ENCODE measurements at regions of chr12 and their contacts with region 1.

Region 1: GRCh38 chr12:55280991-55281390 is 15.4 kb downstream of the OR6C6 start:
- DNase-seq: no peak
- ATAC-seq: no peak
- H3K4me3 ChIP-seq: no peak overlapping the region
- H3K4me3 Mint-ChIP-seq: no peak overlapping the region
- H3K27ac ChIP-seq: no peak overlapping the region
- H3K27ac Mint-ChIP-seq: no peak overlapping the region
- H3K4me1 ChIP-seq: no peaks in the 10 kb centered on the region
- H3K4me1 Mint-ChIP-seq: no peaks in the 10 kb centered on the region
- H3K27me3 ChIP-seq: no peaks in the 10 kb centered on the region
- H3K27me3 Mint-ChIP-seq: peaks cover 18% of the 10 kb centered on the region
- CTCF ChIP-seq: no peak

Region 2: DNA sequence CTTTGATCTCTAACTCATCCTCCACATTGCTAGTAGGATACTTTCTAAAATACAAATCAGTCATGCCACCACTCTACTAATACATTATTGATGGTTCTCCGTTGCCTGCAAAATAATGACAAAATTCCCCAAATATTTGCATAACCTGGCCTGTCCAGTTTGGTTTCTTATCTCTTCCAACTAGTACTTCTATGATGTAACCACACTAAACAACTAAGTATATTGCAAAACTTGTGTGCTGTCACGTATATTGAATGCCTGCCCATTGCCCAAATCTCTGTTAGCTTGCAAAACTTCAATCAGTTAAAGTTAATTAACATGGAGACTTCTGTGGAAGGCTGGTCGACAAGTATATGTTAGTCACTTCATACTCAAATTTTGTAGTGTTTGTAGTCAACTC is 30.0 kb before region 1 on chr12:
- CTCF ChIA-PET with region 1: no interaction called
- POLR2A ChIA-PET with region 1: no interaction called
- intact Hi-C with region 1: loop called in 1 of 2 experiments (anchors 2 kb)
- DNase-seq: no peak
- ATAC-seq: no peak
- H3K4me3 ChIP-seq: no peak overlapping the region
- H3K4me3 Mint-ChIP-seq: no peak overlapping the region
- H3K27ac ChIP-seq: no peak overlapping the region
- H3K27ac Mint-ChIP-seq: no peak overlapping the region
- H3K4me1 ChIP-seq: no peaks in the 10 kb centered on the region
- H3K4me1 Mint-ChIP-seq: no peaks in the 10 kb centered on the region
- H3K27me3 ChIP-seq: peaks cover 0 to 2% of the 10 kb centered on the region in 2 experiments
- H3K27me3 Mint-ChIP-seq: peaks cover 14% of the 10 kb centered on the region
- CTCF ChIP-seq: no peak

Measured in CD8-positive, alpha-beta T cell (primary cell).